Activated CD4-positive, alpha-beta T cell treated with anti-CD3 and anti-CD28 coated beads for 36 hours (primary cell): ENCODE measurements at regions of chr6 and their contacts with region 1.

Region 1: GRCh38 chr6:135535989-135536414 is 38.5 kb upstream of the AHI1 start:
- DNase-seq: peak; percentile 8
- ATAC-seq: no peak
- H3K4me3 Mint-ChIP-seq: no peak overlapping the region
- H3K27ac Mint-ChIP-seq: no peak overlapping the region
- H3K4me1 Mint-ChIP-seq: peaks cover 27% of the 10 kb centered on the region
- H3K27me3 Mint-ChIP-seq: peaks cover 3% of the 10 kb centered on the region

Region 2: GRCh38 chr6:135497412-135498269 is 38.4 kb before region 1 on chr6 and contains the start of gene AHI1:
- CTCF ChIA-PET with region 1: interaction called, 4 read pairs
- POLR2A ChIA-PET with region 1: interaction called, 6 read pairs
- intact Hi-C with region 1: loop called in 1 of 2 experiments (anchors 1 kb)
- DNase-seq: peak; percentile 94
- ATAC-seq: peak; percentile 81
- H3K4me3 Mint-ChIP-seq: no peak within 1 kb of the TSS
- H3K27ac Mint-ChIP-seq: peak within 1 kb of the TSS; percentile 94
- H3K4me1 Mint-ChIP-seq: peaks cover 7% of the 10 kb centered on the region
- H3K27me3 Mint-ChIP-seq: no peaks in the 10 kb centered on the region
- total RNA-seq, gene AHI1: 35.6 to 36.0 TPM

Region 3: GRCh38 chr6:135624402-135625295 is 88.6 kb after region 1 on chr6:
- CTCF ChIA-PET with region 1: interaction called, 8 read pairs
- POLR2A ChIA-PET with region 1: no interaction called
- intact Hi-C with region 1: loop called (anchors 1 to 5 kb)
- DNase-seq: peak; percentile 19
- ATAC-seq: peak; percentile 84
- H3K4me3 Mint-ChIP-seq: no peak overlapping the region
- H3K27ac Mint-ChIP-seq: peak overlapping the region; percentile 90
- H3K4me1 Mint-ChIP-seq: peaks cover 31% of the 10 kb centered on the region
- H3K27me3 Mint-ChIP-seq: no peaks in the 10 kb centered on the region

Region 4: GRCh38 chr6:135675862-135676261 is 139.9 kb after region 1 on chr6:
- CTCF ChIA-PET with region 1: interaction called, 5 read pairs
- POLR2A ChIA-PET with region 1: no interaction called
- intact Hi-C with region 1: loop called (anchors 1 to 2 kb)
- DNase-seq: peak; percentile 51
- ATAC-seq: peak; percentile 82
- H3K4me3 Mint-ChIP-seq: no peak overlapping the region
- H3K27ac Mint-ChIP-seq: no peak overlapping the region
- H3K4me1 Mint-ChIP-seq: peaks cover 19% of the 10 kb centered on the region
- H3K27me3 Mint-ChIP-seq: no peaks in the 10 kb centered on the region

Region 5: GRCh38 chr6:135909737-135910387 is 373.9 kb after region 1 on chr6:
- CTCF ChIA-PET with region 1: interaction called, 13 read pairs
- POLR2A ChIA-PET with region 1: no interaction called
- intact Hi-C with region 1: loop called (anchors 1 kb)
- DNase-seq: peak; percentile 71
- ATAC-seq: peak; percentile 81
- H3K4me3 Mint-ChIP-seq: no peak overlapping the region
- H3K27ac Mint-ChIP-seq: no peak overlapping the region
- H3K4me1 Mint-ChIP-seq: peaks cover 11% of the 10 kb centered on the region
- H3K27me3 Mint-ChIP-seq: no peaks in the 10 kb centered on the region